ENCODE measurements at regions of chr18 and their contacts with region 1.

Region 1: DNA sequence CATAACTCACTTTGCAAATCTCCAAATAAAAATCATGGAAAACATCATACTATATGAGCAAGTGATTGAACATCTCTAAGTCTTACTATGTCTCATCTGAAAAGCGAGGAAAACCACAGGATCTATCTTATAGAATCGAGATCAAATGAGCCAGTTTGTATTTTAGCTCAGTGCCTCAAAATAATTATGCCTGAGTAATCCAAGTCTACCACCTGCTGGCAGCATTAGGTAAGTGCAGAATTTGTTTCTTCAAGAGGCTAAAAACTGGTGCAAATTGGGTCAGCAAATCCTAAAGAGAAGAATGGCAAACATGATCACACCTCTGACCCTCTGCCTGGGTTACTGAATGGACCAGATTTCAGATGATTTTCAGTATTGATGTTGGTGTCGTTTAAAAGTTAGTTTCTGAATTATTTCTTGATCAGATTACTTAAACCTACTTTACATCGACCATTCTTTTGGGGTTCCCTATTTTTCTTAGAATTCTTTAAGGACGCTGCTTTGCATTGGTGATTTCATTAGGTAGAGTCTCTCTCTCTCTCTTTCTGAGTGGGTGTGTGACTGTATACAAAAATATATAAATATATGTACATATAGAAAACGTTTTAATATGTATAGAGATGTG is 12.7 kb upstream of the FHOD3 start:
- DNase-seq: peak in 1 of 2 experiments; percentile 24
- H3K4me3 ChIP-seq: no peak overlapping the region
- H3K4me3 Mint-ChIP-seq: no peak overlapping the region
- H3K27ac Mint-ChIP-seq: no peak overlapping the region
- H3K4me1 ChIP-seq: no peaks in the 10 kb centered on the region
- H3K4me1 Mint-ChIP-seq: no peaks in the 10 kb centered on the region
- H3K27me3 ChIP-seq: no peaks in the 10 kb centered on the region
- H3K27me3 Mint-ChIP-seq: peaks cover 2% of the 10 kb centered on the region
- CTCF ChIP-seq: peak; percentile 45 to 57

Region 2: GRCh38 chr18:36015629-36016028 is 269.2 kb before region 1 on chr18:
- CTCF ChIA-PET with region 1: interaction called, 3 read pairs
- POLR2A ChIA-PET with region 1: no interaction called
- intact Hi-C with region 1: loop called (anchors 5 kb)
- DNase-seq: no peak
- H3K4me3 ChIP-seq: no peak overlapping the region
- H3K4me3 Mint-ChIP-seq: no peak overlapping the region
- H3K27ac Mint-ChIP-seq: no peak overlapping the region
- H3K4me1 ChIP-seq: no peaks in the 10 kb centered on the region
- H3K4me1 Mint-ChIP-seq: no peaks in the 10 kb centered on the region
- H3K27me3 ChIP-seq: no peaks in the 10 kb centered on the region
- H3K27me3 Mint-ChIP-seq: no peaks in the 10 kb centered on the region
- CTCF ChIP-seq: no peak

Region 3: GRCh38 chr18:36186911-36187834 is 97.6 kb before region 1 on chr18 and contains the start of gene MOCOS:
- CTCF ChIA-PET with region 1: no interaction called
- POLR2A ChIA-PET with region 1: no interaction called
- intact Hi-C with region 1: loop called (anchors 5 kb)
- DNase-seq: peak; percentile 78 to 85
- H3K4me3 ChIP-seq: peak within 1 kb of the TSS; percentile 69
- H3K4me3 Mint-ChIP-seq: peak within 1 kb of the TSS; percentile 65
- H3K27ac Mint-ChIP-seq: peak within 1 kb of the TSS; percentile 45
- H3K4me1 ChIP-seq: 0 out of 2 replicates have a peak, but pooled peaks cover 5% of the 10 kb centered on the region
- H3K4me1 Mint-ChIP-seq: peaks cover 10% of the 10 kb centered on the region
- H3K27me3 ChIP-seq: no peaks in the 10 kb centered on the region
- H3K27me3 Mint-ChIP-seq: no peaks in the 10 kb centered on the region
- CTCF ChIP-seq: no peak
- total RNA-seq, gene MOCOS: 4.1 and 5.5 TPM in 2 replicates

Region 4: GRCh38 chr18:36247036-36247435 is 37.7 kb before region 1 on chr18:
- CTCF ChIA-PET with region 1: no interaction called
- POLR2A ChIA-PET with region 1: no interaction called
- intact Hi-C with region 1: no loop called
- DNase-seq: no peak
- H3K4me3 ChIP-seq: no peak overlapping the region
- H3K4me3 Mint-ChIP-seq: no peak overlapping the region
- H3K27ac Mint-ChIP-seq: no peak overlapping the region
- H3K4me1 ChIP-seq: peaks cover 7% of the 10 kb centered on the region; the same call in 1 of the 2 replicates
- H3K4me1 Mint-ChIP-seq: peaks cover 6% of the 10 kb centered on the region
- H3K27me3 ChIP-seq: no peaks in the 10 kb centered on the region
- H3K27me3 Mint-ChIP-seq: no peaks in the 10 kb centered on the region
- CTCF ChIP-seq: no peak

Measured in Caco-2 (cell line).